Psoas muscle (tissue), 8 donors: ENCODE measurements at regions of chr6 and their contacts with region 1.

Region 1: GRCh38 chr6:151627705-151628455 is 134.1 kb downstream of the CCDC170 start:
- DNase-seq: no peak
- ATAC-seq: no peak
- H3K4me3 ChIP-seq: no peak overlapping the region
- H3K27ac ChIP-seq: no peak overlapping the region
- H3K4me1 ChIP-seq: no peaks in the 10 kb centered on the region
- H3K27me3 ChIP-seq: no peaks in the 10 kb centered on the region
- CTCF ChIP-seq: no peak

Region 2: GRCh38 chr6:151160929-151161757 is 466.7 kb before region 1 on chr6:
- intact Hi-C with region 1: no loop called
- DNase-seq: no peak
- ATAC-seq: no peak
- H3K4me3 ChIP-seq: no peak overlapping the region
- H3K27ac ChIP-seq: no peak overlapping the region
- H3K4me1 ChIP-seq: no peaks in the 10 kb centered on the region
- H3K27me3 ChIP-seq: no peaks in the 10 kb centered on the region
- CTCF ChIP-seq: no peak

Region 3: DNA sequence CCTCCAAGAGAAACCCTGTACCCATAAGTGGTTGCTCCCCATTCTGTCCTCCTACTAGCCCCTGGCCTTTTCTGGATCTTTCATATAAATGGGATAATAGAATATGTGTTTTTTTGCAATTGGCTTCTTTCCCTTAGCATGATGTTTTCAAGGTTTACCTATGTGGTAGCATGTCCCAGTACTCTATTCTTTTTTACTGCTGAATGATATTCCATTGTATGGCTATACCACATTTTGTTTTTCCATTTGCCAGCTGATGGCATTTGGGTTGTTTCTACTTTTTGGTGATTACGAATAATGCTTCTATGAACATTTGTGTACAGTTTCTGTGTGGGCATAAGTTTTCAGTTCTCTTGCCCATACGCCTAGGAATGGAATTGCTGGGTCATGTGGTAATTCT is 14.4 kb before region 1 on chr6:
- intact Hi-C with region 1: loop called in 1 of 2 experiments (anchors 1 kb)
- DNase-seq: no peak
- ATAC-seq: no peak
- H3K4me3 ChIP-seq: no peak overlapping the region
- H3K27ac ChIP-seq: no peak overlapping the region
- H3K4me1 ChIP-seq: no peaks in the 10 kb centered on the region
- H3K27me3 ChIP-seq: no peaks in the 10 kb centered on the region
- CTCF ChIP-seq: no peak